ENCODE measurements at regions of chr10 and their contacts with region 1.

Region 1: DNA sequence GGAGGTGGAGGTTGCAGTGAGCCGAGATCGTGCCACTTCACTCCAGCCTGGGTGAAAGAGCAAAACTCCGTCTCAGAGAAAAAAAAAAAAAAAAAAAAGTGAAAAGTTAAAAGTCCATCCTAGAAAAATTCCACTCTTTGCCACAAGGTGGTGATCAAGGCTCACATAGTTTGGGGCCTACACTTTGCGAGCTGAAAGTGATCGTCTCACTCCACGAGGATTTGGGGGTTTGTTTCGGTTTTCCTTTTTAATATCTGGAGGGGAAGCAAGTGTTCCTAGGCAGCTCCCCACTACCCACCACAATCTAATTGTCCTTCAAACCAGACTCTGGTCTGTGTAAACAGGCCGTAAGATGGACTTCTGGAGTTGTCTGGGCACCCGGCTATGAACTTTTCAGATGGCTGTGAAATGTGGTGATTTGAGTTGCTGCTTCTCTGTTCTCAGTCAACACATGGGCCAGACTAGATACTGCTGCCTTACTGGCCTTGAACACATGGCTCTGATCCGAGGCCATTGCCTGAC is 27.1 kb downstream of the PRLHR start:
- DNase-seq: peak; percentile 63
- H3K4me3 ChIP-seq: no peak overlapping the region
- H3K27ac ChIP-seq: no peak overlapping the region
- H3K4me1 ChIP-seq: peaks cover 14% of the 10 kb centered on the region
- H3K27me3 ChIP-seq: no peaks in the 10 kb centered on the region
- CTCF ChIP-seq: peak; percentile 85 to 95 (median 91)
- POLR2A ChIP-seq: no peak

Region 2: GRCh38 chr10:118204292-118204943 is 364.0 kb before region 1 on chr10:
- intact Hi-C with region 1: no loop called
- DNase-seq: no peak
- H3K4me3 ChIP-seq: no peak overlapping the region
- H3K27ac ChIP-seq: no peak overlapping the region
- H3K4me1 ChIP-seq: no peaks in the 10 kb centered on the region
- H3K27me3 ChIP-seq: no peaks in the 10 kb centered on the region
- CTCF ChIP-seq: no peak
- POLR2A ChIP-seq: no peak

Region 3: DNA sequence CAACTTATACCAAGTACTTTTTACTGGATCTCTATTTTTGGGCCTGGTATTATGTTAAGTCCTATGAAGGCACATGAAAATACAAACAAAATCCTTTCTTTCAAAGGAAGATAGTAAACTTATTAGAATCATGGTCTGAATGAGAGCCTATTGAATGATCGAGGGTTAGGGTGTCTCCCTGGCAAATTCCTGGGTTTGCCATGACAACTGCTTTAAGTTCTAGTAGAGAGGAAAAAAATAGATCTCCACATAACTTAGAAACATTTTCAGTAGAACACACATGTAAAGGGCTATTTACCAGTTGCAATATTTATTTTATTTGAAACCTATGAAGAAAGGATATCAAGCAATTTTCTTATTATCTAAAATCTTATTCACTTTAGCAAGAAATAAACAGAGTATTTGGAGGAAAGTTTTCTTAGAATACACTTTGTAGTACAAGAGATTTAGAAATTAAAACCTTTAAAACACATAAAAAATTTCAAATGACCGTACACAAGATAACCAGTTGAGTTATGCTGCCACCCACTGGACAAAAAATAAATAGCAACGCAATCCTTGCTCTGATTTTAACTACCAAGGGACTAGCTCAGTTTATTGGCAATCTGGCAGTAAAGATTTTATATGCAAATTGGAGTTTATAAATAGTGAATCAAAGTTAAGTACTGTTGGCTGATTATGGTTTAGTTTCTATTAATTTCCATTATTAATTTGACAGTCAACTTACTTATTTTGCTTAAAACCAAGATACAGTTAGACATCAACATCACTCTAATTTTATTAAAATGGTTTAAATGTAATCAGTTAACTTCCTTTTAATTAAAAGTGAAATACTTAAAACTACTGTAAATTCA is 152.5 kb after region 1 on chr10:
- intact Hi-C with region 1: loop called (anchors 5 kb)
- DNase-seq: peak; percentile 85
- H3K4me3 ChIP-seq: no peak overlapping the region
- H3K27ac ChIP-seq: peak overlapping the region in 1 of 2 donors; percentile 12
- H3K4me1 ChIP-seq: peaks cover 9% of the 10 kb centered on the region
- H3K27me3 ChIP-seq: no peaks in the 10 kb centered on the region
- CTCF ChIP-seq: peak; percentile 80 to 89 (median 82)
- POLR2A ChIP-seq: no peak